ENCODE measurements at regions of chr10 and their contacts with region 1.

Region 1: DNA sequence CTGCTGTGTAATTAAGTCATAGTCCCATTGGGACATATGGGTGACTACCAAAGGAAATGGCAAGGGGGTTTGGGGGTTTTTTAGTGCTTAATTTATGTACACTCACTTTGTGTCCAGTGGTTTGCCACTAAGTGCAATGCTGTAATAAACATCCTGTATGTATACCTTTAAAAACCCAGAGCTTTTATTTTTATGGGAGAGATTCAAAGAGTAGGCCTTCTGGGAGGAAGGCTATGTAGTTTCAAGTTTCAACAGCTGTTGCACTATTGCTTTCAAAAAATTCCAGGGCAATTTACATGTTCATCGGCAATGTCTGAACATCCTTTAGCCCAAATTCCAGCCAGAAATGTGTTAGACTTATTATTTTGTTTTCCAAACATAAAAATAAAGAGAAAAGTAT is 744.7 kb downstream of the XPNPEP1 start:
- DNase-seq: no peak
- H3K4me3 ChIP-seq: no peak overlapping the region
- H3K27ac ChIP-seq: no peak overlapping the region
- H3K4me1 ChIP-seq: no peaks in the 10 kb centered on the region
- H3K27me3 ChIP-seq: no peaks in the 10 kb centered on the region
- CTCF ChIP-seq: no peak

Region 2: DNA sequence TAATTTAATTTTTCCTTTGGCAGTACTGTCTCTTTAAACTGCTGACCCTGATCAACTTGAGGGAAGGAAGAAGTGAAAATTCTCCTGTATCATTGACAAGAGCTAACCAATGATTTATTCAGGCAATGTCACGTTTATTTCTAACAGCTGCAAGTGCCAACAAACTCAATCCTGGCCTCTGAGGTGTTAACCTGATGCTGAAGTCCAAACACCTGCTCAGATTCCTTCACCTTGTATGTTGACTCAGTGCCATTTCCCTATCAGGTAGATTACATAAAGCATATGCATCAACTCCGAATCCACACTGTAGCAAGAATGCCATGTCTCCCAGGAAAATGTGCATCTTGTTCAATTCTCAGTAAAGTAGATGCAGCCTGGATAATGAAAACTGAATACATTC is 75.3 kb before region 1 on chr10:
- intact Hi-C with region 1: no loop called
- DNase-seq: no peak
- H3K4me3 ChIP-seq: no peak overlapping the region
- H3K27ac ChIP-seq: no peak overlapping the region
- H3K4me1 ChIP-seq: no peaks in the 10 kb centered on the region
- H3K27me3 ChIP-seq: no peaks in the 10 kb centered on the region
- CTCF ChIP-seq: no peak

Region 3: DNA sequence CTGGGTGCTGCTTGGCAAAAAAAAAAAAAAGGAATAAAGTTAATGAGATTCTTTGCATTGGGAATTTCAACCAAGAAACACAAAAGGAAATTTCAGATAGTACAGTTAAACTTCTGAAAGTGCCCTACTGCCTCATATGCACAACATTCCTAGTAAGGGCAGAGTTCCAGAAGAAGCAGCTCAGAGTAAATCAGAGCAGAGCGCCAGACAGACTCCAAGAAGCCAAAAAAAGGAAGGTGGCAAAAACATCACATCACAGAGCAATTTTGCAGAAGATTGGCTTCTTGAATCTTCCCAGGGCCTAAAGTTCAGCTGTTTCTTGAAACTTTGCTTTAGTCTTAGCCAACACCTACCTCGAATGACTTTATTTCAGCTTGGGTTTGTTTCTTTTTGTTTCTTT is 200.6 kb after region 1 on chr10:
- intact Hi-C with region 1: loop called (anchors 5 kb)
- DNase-seq: no peak
- H3K4me3 ChIP-seq: no peak overlapping the region
- H3K27ac ChIP-seq: no peak overlapping the region
- H3K4me1 ChIP-seq: no peaks in the 10 kb centered on the region
- H3K27me3 ChIP-seq: no peaks in the 10 kb centered on the region
- CTCF ChIP-seq: no peak